ENCODE measurements at regions of chr16 and their contacts with region 1.

Region 1: GRCh38 chr16:56729735-56730662 is at the start of gene NUP93:
- DNase-seq: peak; percentile 76 to 94 (median 90)
- ATAC-seq: peak; percentile 94
- H3K4me3 ChIP-seq: peak within 1 kb of the TSS; percentile 79 to 87
- H3K4me3 Mint-ChIP-seq: no peak within 1 kb of the TSS
- H3K27ac ChIP-seq: peak within 1 kb of the TSS; percentile 58 to 81
- H3K27ac Mint-ChIP-seq: peak within 1 kb of the TSS; percentile 90
- H3K4me1 ChIP-seq: peaks cover 34% of the 10 kb centered on the region
- H3K4me1 Mint-ChIP-seq: peaks cover 23% of the 10 kb centered on the region
- H3K27me3 ChIP-seq: no peaks in the 10 kb centered on the region
- H3K27me3 Mint-ChIP-seq: no peaks in the 10 kb centered on the region
- CTCF ChIP-seq: no peak
- total RNA-seq, gene NUP93: 68.2 to 68.5 TPM

Region 2: DNA sequence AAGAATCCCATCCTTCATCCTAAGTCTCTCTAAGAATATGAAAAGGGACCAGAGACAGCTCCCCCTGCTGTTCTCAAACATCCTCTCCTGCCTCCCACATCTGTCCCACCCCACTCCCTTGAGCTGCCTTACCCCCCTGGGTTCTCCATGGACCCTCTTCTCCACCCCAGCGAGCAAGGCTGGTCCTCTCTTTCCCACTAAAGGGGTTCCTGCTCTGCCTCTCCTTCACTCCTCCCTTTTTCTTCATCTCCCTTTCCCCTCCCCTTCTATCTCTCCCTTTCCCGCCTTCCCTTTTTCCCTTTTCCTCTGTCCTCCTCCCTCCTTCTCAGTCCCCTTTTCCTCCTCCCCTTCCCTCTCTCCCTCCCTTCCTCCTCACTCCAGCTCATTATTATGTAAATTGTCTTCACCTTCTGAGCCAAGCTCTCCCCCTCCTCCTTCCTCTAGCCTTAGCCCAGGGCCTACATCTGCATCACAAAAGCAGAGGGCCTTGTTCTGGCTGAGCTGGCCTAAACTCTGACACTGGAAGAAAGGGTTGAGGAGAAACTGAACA is 448.7 kb before region 1 on chr16:
- CTCF ChIA-PET with region 1: no interaction called
- POLR2A ChIA-PET with region 1: no interaction called
- intact Hi-C with region 1: no loop called
- DNase-seq: peak in 2 of 9 experiments; percentile 36 to 47
- ATAC-seq: no peak
- H3K4me3 ChIP-seq: no peak overlapping the region
- H3K4me3 Mint-ChIP-seq: no peak overlapping the region
- H3K27ac ChIP-seq: no peak overlapping the region
- H3K27ac Mint-ChIP-seq: no peak overlapping the region
- H3K4me1 ChIP-seq: peaks cover 5% of the 10 kb centered on the region
- H3K4me1 Mint-ChIP-seq: peaks cover 21% of the 10 kb centered on the region
- H3K27me3 ChIP-seq: no peaks in the 10 kb centered on the region
- H3K27me3 Mint-ChIP-seq: no peaks in the 10 kb centered on the region
- CTCF ChIP-seq: no peak

Region 3: GRCh38 chr16:56708525-56709442 is 21.2 kb before region 1 on chr16:
- CTCF ChIA-PET with region 1: interaction called, 4 read pairs
- POLR2A ChIA-PET with region 1: interaction called, 20 read pairs
- intact Hi-C with region 1: loop called in 1 of 2 experiments (anchors 1 kb)
- DNase-seq: peak in 8 of 9 experiments; percentile 32 to 82 (median 58)
- ATAC-seq: peak; percentile 90
- H3K4me3 ChIP-seq: peak overlapping the region; percentile 53 to 65
- H3K4me3 Mint-ChIP-seq: peak overlapping the region; percentile 88
- H3K27ac ChIP-seq: peak overlapping the region; percentile 69 to 76
- H3K27ac Mint-ChIP-seq: peak overlapping the region; percentile 97
- H3K4me1 ChIP-seq: peaks cover 28% of the 10 kb centered on the region
- H3K4me1 Mint-ChIP-seq: peaks cover 62% of the 10 kb centered on the region
- H3K27me3 ChIP-seq: no peaks in the 10 kb centered on the region
- H3K27me3 Mint-ChIP-seq: no peaks in the 10 kb centered on the region
- CTCF ChIP-seq: no peak

Measured in CD8-positive, alpha-beta T cell (primary cell).